CD8-positive, alpha-beta T cell (primary cell): ENCODE measurements at regions of chr15 and their contacts with region 1.

Region 1: DNA sequence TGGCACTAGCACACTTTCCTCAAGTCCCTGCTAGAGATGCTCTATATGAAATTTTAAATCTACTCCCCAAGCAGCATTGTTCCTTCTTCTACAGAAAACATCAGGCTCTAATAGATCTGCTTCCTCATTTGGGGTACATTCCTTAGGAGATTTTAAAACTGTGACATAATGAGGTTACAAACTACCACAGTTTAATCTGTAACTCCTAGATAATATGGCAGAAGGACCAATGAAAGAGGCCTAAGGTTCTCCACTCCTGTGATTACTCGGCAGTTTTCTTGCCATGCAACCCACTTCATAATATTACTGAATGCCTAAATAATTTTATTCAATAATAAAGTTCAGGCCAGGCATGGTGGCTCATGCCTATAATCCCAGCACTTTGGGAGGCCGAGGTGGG is 16.1 kb downstream of the ZNF106 start:
- DNase-seq: no peak
- ATAC-seq: no peak
- H3K4me3 ChIP-seq: no peak overlapping the region
- H3K4me3 Mint-ChIP-seq: no peak overlapping the region
- H3K27ac ChIP-seq: no peak overlapping the region
- H3K27ac Mint-ChIP-seq: peak overlapping the region; percentile 37
- H3K4me1 ChIP-seq: no peaks in the 10 kb centered on the region
- H3K4me1 Mint-ChIP-seq: peaks cover 9% of the 10 kb centered on the region
- H3K27me3 ChIP-seq: no peaks in the 10 kb centered on the region
- H3K27me3 Mint-ChIP-seq: no peaks in the 10 kb centered on the region
- CTCF ChIP-seq: no peak

Region 2: GRCh38 chr15:42215913-42216829 is 258.7 kb before region 1 on chr15:
- CTCF ChIA-PET with region 1: no interaction called
- POLR2A ChIA-PET with region 1: no interaction called
- intact Hi-C with region 1: loop called in 1 of 2 experiments (anchors 10 kb)
- DNase-seq: no peak
- ATAC-seq: no peak
- H3K4me3 ChIP-seq: no peak overlapping the region
- H3K4me3 Mint-ChIP-seq: no peak overlapping the region
- H3K27ac ChIP-seq: no peak overlapping the region
- H3K27ac Mint-ChIP-seq: no peak overlapping the region
- H3K4me1 ChIP-seq: no peaks in the 10 kb centered on the region
- H3K4me1 Mint-ChIP-seq: no peaks in the 10 kb centered on the region
- H3K27me3 ChIP-seq: no peaks in the 10 kb centered on the region
- H3K27me3 Mint-ChIP-seq: no peaks in the 10 kb centered on the region
- CTCF ChIP-seq: no peak

Region 3: DNA sequence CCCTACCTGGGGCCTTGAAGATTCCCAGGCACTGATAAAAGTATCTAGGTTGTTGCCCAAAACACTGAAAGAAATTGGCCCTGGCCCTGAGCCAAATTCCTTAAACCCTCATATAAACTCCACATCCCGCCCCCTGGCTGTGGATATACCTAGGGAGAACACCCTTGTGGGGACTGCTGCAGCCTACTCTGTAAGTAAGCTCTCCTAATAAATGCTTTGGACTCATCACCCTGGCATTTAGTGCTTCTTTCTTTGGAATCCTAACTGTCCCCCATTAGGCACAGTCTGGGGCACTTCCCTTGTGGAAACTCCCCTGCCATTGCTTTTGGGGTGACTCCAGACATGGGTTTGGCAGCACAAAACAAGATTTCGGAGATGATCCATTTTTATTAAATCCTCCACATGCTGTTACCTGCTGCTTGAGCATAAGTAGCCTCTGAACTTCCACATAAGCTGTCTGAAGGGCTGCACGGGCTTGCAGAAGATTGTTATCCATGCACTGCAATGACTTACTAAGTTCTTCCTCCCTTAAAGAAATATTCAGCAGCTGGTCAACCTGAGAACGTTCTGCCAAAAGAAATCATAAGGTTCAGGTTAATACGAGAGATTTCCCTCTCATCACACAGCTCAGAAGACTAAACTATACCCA is 30.3 kb before region 1 on chr15:
- CTCF ChIA-PET with region 1: no interaction called
- POLR2A ChIA-PET with region 1: no interaction called
- intact Hi-C with region 1: no loop called
- DNase-seq: no peak
- ATAC-seq: no peak
- H3K4me3 ChIP-seq: no peak overlapping the region
- H3K4me3 Mint-ChIP-seq: no peak overlapping the region
- H3K27ac ChIP-seq: no peak overlapping the region
- H3K27ac Mint-ChIP-seq: no peak overlapping the region
- H3K4me1 ChIP-seq: no peaks in the 10 kb centered on the region
- H3K4me1 Mint-ChIP-seq: no peaks in the 10 kb centered on the region
- H3K27me3 ChIP-seq: no peaks in the 10 kb centered on the region
- H3K27me3 Mint-ChIP-seq: no peaks in the 10 kb centered on the region
- CTCF ChIP-seq: no peak

Region 4: DNA sequence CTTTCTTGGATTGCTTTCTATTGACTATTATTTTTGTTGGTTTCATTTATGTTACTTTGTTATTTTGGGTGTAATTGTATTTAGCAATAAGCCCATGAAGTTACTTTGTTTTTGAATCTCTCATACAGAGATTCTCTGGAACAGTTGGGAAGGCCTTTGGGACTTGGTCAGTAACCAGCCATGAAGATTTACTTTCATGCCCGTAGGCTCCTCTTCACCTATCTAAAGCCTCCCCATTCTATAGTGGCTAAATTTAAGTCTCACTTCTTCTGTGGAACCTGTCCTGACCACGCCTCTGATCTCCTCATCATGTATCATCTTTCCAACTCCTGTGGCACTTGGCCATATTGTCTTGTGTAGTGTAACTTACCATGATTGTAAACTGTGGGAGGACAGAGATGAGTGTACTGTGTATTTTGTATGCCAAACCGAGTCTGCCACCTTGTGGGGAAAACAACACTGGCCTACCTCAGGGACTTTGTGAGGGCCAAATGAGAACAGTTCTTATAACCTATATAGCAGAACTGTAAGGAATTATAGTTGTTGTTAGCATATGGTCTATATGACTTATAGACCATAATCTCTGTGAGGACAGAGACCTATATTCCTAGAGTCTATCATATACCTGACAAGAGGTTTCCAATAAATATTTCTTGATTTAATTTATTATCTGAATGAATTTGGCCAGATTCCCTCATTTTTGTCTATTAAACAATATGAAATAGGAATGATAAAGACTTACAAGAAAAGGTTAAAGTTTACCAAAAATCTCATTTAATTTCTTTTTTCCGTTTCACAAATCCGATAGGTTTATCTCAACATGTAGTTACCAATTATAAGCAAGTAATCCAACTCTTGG is 175.6 kb after region 1 on chr15:
- CTCF ChIA-PET with region 1: no interaction called
- POLR2A ChIA-PET with region 1: no interaction called
- intact Hi-C with region 1: loop called (anchors 1 kb)
- DNase-seq: peak; percentile 26 to 76 (median 56)
- ATAC-seq: peak; percentile 85
- H3K4me3 ChIP-seq: no peak overlapping the region
- H3K4me3 Mint-ChIP-seq: no peak overlapping the region
- H3K27ac ChIP-seq: no peak overlapping the region
- H3K27ac Mint-ChIP-seq: no peak overlapping the region
- H3K4me1 ChIP-seq: no peaks in the 10 kb centered on the region
- H3K4me1 Mint-ChIP-seq: peaks cover 2% of the 10 kb centered on the region
- H3K27me3 ChIP-seq: no peaks in the 10 kb centered on the region
- H3K27me3 Mint-ChIP-seq: no peaks in the 10 kb centered on the region
- CTCF ChIP-seq: peak; percentile 66